Activated CD4-positive, alpha-beta memory T cell treated with anti-CD3 and anti-CD28 coated beads, Interleukin-2, amount 10 ng/mL, durations not matched to agents 7 days and 5 days (primary cell): ENCODE measurements at regions of chr2 and their contacts with region 1.

Region 1: DNA sequence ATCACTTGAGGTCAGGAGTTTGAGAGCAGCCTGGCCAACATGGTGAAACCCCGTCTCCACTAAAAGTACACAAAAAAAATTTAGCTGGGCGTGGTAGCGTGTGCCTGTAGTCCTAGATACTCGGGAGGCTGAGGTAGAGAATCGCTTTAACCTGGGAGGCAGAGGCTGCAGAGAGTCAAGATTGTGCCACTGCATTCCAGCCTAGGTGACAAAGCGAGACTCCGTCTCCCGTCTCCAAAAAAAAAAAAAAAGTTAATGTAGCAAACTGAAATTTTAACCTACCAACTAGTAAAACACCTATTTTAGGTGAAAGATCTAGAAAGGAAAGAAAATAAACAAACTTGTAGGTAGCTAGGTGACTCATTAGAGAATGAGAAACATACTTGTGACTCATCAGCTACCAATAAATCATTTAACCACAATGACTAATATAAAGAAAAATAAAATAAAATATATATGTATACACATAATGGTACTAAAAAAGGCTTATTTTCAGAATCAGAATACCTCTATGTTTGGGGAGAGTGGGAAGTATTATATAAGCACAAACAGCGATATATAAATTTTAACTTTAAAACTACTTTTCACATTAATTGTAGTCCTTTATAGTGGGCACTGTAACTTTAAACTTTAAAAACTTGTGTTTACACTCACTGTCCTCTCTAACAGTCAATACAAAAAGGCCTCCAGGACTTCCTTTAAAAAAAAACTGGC is 36.6 kb downstream of the DARS1 start:
- DNase-seq: peak; percentile 29
- H3K4me3 Mint-ChIP-seq: peak overlapping the region; percentile 51
- H3K27ac Mint-ChIP-seq: peak overlapping the region; percentile 85
- H3K4me1 Mint-ChIP-seq: peaks cover 42% of the 10 kb centered on the region
- H3K27me3 Mint-ChIP-seq: no peaks in the 10 kb centered on the region

Region 2: DNA sequence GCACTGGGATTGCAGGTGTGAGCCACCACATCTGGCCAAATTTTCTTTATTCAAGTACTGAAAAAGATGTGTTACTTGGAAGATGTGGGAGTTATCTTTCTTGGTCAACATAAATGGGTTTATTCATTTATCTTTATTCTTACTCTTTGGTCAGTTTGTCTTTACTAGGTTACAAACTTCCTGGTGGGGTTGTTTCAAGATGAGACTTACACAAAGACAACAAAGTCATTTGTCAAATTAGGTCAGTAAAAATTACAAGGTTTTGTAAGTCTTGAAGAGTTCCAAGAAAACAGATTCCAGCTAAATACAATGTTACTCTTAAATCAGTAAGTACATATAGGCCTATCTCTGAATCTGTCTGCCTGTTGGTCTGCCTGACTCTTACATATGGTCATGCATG is 12.3 kb before region 1 on chr2:
- CTCF ChIA-PET with region 1: interaction called, 5 read pairs
- POLR2A ChIA-PET with region 1: interaction called, 10 read pairs
- DNase-seq: no peak
- H3K4me3 Mint-ChIP-seq: no peak overlapping the region
- H3K27ac Mint-ChIP-seq: peak overlapping the region; percentile 32
- H3K4me1 Mint-ChIP-seq: peaks cover 51% of the 10 kb centered on the region
- H3K27me3 Mint-ChIP-seq: no peaks in the 10 kb centered on the region

Region 3: GRCh38 chr2:135960656-135961551 is 12.1 kb after region 1 on chr2:
- CTCF ChIA-PET with region 1: interaction called, 3 read pairs
- POLR2A ChIA-PET with region 1: interaction called, 21 read pairs
- DNase-seq: peak; percentile 33
- H3K4me3 Mint-ChIP-seq: peak overlapping the region; percentile 53
- H3K27ac Mint-ChIP-seq: peak overlapping the region; percentile 92
- H3K4me1 Mint-ChIP-seq: peaks cover 58% of the 10 kb centered on the region
- H3K27me3 Mint-ChIP-seq: no peaks in the 10 kb centered on the region